ENCODE measurements at regions of chr3 and their contacts with region 1.

Region 1: GRCh38 chr3:111903067-111903511 is 44.0 kb downstream of the PHLDB2 start:
- DNase-seq: peak; percentile 97
- ATAC-seq: peak; percentile 90
- H3K4me3 ChIP-seq: no peak overlapping the region
- H3K27ac ChIP-seq: peak overlapping the region; percentile 80
- H3K4me1 ChIP-seq: peaks cover 38% of the 10 kb centered on the region
- H3K27me3 ChIP-seq: no peaks in the 10 kb centered on the region
- CTCF ChIP-seq: no peak

Region 2: GRCh38 chr3:111639316-111639715 is 263.8 kb before region 1 on chr3:
- CTCF ChIA-PET with region 1: no interaction called
- POLR2A ChIA-PET with region 1: no interaction called
- intact Hi-C with region 1: no loop called
- DNase-seq: no peak
- ATAC-seq: no peak
- H3K4me3 ChIP-seq: no peak overlapping the region
- H3K27ac ChIP-seq: no peak overlapping the region
- H3K4me1 ChIP-seq: no peaks in the 10 kb centered on the region
- H3K27me3 ChIP-seq: no peaks in the 10 kb centered on the region
- CTCF ChIP-seq: no peak

Region 3: DNA sequence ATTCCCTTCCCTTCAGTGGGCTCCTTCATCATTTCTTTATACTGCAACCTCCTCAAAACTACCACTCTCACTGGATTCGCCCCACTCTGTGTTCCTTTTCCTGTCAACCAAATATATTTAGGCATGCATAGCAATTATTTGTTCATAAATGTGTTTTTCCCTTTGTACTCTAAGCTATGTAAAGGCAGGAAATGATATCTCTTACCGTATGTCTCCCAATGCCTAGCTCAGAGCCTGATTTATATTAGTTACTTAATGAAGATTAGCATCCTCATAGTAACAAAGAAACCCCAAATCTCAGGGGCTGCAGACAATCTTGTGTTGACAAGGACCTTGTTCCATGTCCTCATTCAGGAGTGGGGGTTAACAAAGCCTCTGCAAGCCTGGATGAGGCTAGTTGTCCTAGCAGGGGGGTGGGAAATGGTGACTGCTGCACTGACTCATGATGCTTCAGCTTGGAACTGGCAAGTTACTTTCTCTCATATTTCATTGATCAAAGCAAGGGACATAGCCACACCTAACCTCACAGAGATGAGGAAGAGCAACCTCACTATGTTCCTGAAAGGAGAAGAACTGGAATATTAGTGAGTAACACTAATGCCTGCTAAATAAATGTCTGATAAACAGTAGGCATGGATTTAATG is 28.8 kb before region 1 on chr3:
- CTCF ChIA-PET with region 1: no interaction called
- POLR2A ChIA-PET with region 1: no interaction called
- intact Hi-C with region 1: loop called (anchors 1 kb)
- DNase-seq: peak; percentile 93
- ATAC-seq: peak; percentile 97
- H3K4me3 ChIP-seq: peak overlapping the region; percentile 12; the same call in 1 of the 2 replicates
- H3K27ac ChIP-seq: peak overlapping the region; percentile 72
- H3K4me1 ChIP-seq: peaks cover 47% of the 10 kb centered on the region
- H3K27me3 ChIP-seq: no peaks in the 10 kb centered on the region
- CTCF ChIP-seq: no peak

Region 4: DNA sequence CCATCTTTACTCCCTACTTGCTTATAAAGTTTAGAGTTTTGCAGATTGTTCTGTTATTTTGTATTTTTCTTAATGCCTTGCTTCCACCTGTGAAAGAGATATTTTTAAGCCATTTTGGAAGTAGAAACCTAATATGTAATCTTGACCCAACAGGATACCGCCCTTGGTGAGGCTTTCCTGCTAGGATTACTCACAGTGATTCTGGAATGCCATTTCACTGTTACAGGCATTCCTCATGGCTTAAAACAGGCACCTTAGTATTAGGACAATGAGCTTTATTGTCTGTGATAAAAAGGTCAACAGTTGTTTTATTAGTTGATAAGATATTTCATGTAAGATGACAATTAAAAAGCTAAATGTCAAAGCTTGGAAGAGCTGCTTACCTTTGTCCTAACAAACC is 14.2 kb after region 1 on chr3:
- CTCF ChIA-PET with region 1: no interaction called
- POLR2A ChIA-PET with region 1: no interaction called
- intact Hi-C with region 1: loop called (anchors 1 kb)
- DNase-seq: peak; percentile 94
- ATAC-seq: peak; percentile 97
- H3K4me3 ChIP-seq: peak overlapping the region; percentile 12; the same call in 1 of the 2 replicates
- H3K27ac ChIP-seq: peak overlapping the region; percentile 41
- H3K4me1 ChIP-seq: peaks cover 46% of the 10 kb centered on the region
- H3K27me3 ChIP-seq: no peaks in the 10 kb centered on the region
- CTCF ChIP-seq: no peak

Region 5: DNA sequence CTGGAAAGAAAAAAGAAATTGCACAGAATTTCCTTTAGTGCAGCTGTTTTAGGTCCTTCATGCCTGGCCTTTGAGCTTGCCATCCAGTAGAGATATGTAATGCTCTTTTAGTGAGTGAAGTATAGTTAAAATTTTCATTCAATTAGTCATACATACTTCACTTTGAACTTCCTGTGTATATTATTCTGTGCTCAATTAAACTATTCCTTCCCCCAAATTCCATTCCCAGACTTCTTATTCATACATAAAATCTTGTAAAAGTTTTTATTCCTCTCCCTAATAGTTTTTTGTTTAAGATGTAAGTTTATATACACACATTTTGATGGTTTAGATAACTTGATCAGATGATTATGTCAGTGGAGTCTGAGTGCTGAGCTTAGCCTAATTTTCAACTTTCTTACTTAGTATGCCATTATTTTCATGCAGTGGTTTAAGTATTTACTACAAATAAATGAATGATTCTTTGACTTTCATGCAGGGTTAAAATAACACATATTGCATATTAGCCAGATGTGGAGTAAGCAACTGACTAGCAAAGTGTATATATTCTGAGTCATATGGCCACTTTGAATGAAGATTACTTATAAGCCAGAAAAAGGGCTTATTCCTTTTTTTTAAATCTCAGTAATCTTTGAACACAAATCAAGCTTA is 33.2 kb after region 1 on chr3:
- CTCF ChIA-PET with region 1: interaction called, 4 read pairs
- POLR2A ChIA-PET with region 1: no interaction called
- intact Hi-C with region 1: loop called (anchors 1 kb)
- DNase-seq: peak; percentile 89
- ATAC-seq: peak; percentile 94
- H3K4me3 ChIP-seq: peak overlapping the region; percentile 18; the same call in 1 of the 2 replicates
- H3K27ac ChIP-seq: peak overlapping the region; percentile 89
- H3K4me1 ChIP-seq: peaks cover 45% of the 10 kb centered on the region
- H3K27me3 ChIP-seq: no peaks in the 10 kb centered on the region
- CTCF ChIP-seq: no peak

Measured in PC-3 (cell line).